Gastrocnemius medialis (tissue), 4 donors: ENCODE measurements at regions of chr2 and their contacts with region 1.

Region 1: DNA sequence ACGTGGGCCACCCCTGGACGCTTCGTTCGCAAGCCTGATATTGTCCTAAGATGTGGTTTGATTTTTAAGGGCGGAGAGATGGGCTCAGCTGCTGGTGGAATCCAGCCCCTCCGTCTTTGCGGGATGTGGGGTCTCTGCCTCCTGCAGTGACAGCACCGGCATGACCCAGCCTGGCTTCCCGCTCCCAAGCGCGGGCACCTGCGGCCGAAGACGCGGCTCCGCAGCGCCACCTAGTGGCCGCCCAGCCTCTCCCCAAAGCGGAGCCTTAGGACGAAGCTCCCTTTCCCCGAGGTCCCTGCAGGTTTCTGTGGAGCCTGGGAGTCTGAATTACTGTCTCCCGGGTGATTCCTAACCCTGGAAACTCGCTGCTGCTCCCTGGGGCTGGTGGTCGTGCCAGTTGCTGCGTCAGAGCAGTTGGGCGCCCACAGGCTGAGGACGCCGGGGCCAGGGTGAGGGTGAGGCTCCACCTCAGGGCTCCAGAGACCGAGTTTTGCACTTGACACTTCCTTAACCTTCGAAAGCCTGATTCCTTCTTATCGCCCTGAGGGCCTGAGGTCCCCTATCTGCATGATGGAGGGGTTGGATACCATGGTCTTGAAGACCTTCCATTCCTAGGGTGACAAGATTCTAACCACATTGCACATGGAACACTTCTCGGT is 137.5 kb downstream of the TPO start:
- DNase-seq: no peak
- ATAC-seq: peak; percentile 45 to 66
- H3K4me3 ChIP-seq: no peak overlapping the region
- H3K27ac ChIP-seq: no peak overlapping the region
- H3K4me1 ChIP-seq: peaks cover 0 to 11% of the 10 kb centered on the region in 2 donors
- H3K27me3 ChIP-seq: peaks cover 0 to 4% (median 0%) of the 10 kb centered on the region in 3 donors
- CTCF ChIP-seq: peak; percentile 26 to 93 (median 83)
- POLR2A ChIP-seq: no peak

Region 2: DNA sequence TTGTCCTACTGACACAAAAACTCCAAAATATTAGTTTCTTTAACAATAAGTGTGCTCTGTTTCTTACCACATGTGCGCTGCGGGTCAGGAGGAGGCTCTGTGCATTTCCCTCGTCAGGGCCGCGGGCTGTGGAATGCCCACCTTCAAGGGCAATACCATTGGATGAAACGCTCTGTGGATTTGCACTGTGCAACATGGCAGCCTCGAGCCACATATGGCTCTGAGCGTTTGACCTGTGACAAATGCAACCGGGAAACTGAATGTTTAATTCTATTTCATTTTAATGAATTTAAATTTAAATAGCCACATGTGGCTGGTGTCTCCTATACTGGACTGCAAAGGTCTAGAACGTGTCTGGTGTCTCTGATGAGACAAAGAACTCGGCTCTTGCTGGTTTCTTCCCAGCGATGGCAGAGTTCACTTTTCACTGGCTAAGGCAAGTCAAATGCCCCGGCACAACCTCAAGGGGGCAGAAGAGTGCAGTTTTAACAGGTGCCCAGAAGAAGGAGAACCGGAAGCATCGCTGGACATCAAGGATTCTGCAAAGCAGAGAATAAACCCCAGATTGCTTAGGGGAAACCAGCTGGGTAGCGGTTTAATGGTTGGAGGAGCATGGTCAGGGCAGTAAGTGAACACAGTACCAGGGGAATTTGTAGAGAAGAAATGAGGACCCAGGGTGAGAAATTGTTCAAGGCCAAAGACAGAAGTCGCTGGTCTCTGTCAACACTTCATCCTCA is 836.6 kb before region 1 on chr2:
- in situ Hi-C with region 1: loop called in 1 of 4 experiments (anchors 25 kb)
- intact Hi-C with region 1: loop called (anchors 10 kb)
- DNase-seq: no peak
- ATAC-seq: peak in 1 of 2 donors; percentile 33
- H3K4me3 ChIP-seq: no peak overlapping the region
- H3K27ac ChIP-seq: no peak overlapping the region
- H3K4me1 ChIP-seq: no peaks in the 10 kb centered on the region
- H3K27me3 ChIP-seq: peaks cover 0 to 17% (median 8%) of the 10 kb centered on the region in 3 donors
- CTCF ChIP-seq: peak; percentile 4 to 52 (median 27)
- POLR2A ChIP-seq: no peak

Region 3: DNA sequence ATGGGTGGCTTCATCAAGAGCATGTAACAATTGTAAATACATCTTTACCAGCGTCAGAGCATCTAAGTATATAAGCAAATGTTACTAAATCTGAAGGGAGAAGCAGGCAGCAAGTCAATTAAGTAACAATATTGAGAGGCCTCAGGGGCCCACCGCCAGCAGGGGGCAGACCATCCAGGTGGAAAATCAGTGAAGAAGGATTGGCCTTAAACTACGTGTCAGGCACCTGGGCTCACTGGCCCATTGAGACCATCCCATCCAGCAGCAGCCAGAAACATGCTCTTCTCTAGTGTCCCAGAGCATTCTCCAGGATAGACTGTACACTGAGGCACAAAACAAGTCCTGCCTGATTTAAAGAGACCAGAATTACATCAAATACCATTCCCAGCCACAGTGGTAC is 696.3 kb before region 1 on chr2:
- in situ Hi-C with region 1: no loop called
- intact Hi-C with region 1: loop called (anchors 5 kb)
- DNase-seq: no peak
- ATAC-seq: no peak
- H3K4me3 ChIP-seq: no peak overlapping the region
- H3K27ac ChIP-seq: no peak overlapping the region
- H3K4me1 ChIP-seq: no peaks in the 10 kb centered on the region
- H3K27me3 ChIP-seq: no peaks in the 10 kb centered on the region
- CTCF ChIP-seq: peak in 3 of 5 experiments; percentile 24 to 49 (median 46)
- POLR2A ChIP-seq: no peak

Region 4: GRCh38 chr2:950080-950966 is 600.5 kb before region 1 on chr2 and contains the start of gene SNTG2:
- in situ Hi-C with region 1: no loop called
- intact Hi-C with region 1: loop called (anchors 10 kb)
- DNase-seq: no peak
- ATAC-seq: no peak
- H3K4me3 ChIP-seq: peak within 1 kb of the TSS; percentile 51 to 57 (median 54)
- H3K27ac ChIP-seq: peak within 1 kb of the TSS in 2 of 4 donors; percentile 34 to 35
- H3K4me1 ChIP-seq: peaks cover 6 to 8% of the 10 kb centered on the region in 2 donors
- H3K27me3 ChIP-seq: peaks cover 20 to 50% (median 34%) of the 10 kb centered on the region in 3 donors
- CTCF ChIP-seq: no peak
- POLR2A ChIP-seq: peak; percentile 40 to 63
- total RNA-seq, gene SNTG2: 0.55 to 1.0 (median 0.92) TPM in 3 of 4 donors, not detected in the other

Region 5: DNA sequence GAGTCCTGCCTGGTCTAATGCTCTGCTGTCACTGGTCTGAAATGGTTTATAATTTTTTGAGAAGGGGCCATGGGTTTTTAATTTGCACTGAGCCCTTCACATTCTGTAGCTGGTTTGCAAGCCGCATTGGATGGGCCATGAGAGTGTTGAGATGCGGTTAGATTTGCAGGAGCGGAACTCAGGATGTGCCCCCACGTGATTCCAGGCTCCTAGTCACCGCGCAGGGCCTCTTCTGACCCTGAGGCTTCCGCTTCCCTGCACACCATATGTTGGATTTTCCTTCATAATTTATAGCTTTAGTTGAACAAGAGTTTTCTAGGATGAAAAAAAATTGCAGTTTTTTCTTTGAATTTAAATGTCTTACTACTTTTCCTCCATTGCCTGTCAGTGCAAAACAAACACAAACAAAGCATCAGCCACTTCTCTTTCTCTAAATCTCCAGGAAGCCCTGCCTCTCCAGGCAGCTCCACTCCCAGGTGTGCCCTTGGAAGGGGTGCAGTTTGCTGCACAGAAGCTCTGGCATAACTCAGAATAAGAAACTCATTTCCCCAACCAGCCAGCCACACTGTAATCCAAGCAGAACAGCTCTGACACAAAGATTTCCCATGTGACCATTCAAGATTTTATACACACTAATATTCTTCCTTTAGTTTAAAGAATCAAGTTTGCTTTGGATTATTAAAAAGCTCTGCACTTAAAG is 155.9 kb before region 1 on chr2:
- in situ Hi-C with region 1: no loop called
- intact Hi-C with region 1: no loop called
- DNase-seq: no peak
- ATAC-seq: no peak
- H3K4me3 ChIP-seq: no peak overlapping the region
- H3K27ac ChIP-seq: no peak overlapping the region
- H3K4me1 ChIP-seq: no peaks in the 10 kb centered on the region
- H3K27me3 ChIP-seq: no peaks in the 10 kb centered on the region
- CTCF ChIP-seq: no peak
- POLR2A ChIP-seq: no peak